IMR-90 (cell line): ENCODE measurements at regions of chr17 and their contacts with region 1.

Region 1: GRCh38 chr17:3845621-3846441 is at the start of gene NCBP3:
- DNase-seq: peak; percentile 91
- ATAC-seq: peak; percentile 100
- H3K4me3 ChIP-seq: peak within 1 kb of the TSS; percentile 88
- H3K27ac ChIP-seq: peak within 1 kb of the TSS; percentile 95
- H3K4me1 ChIP-seq: peaks cover 3% of the 10 kb centered on the region
- H3K27me3 ChIP-seq: peaks cover 6% of the 10 kb centered on the region
- CTCF ChIP-seq: peak; percentile 98
- POLR2A ChIP-seq: peak; percentile 95
- RAD21 ChIP-seq: peak; percentile 36
- total RNA-seq, gene NCBP3: 10.8 and 15.6 TPM in 2 replicates

Region 2: DNA sequence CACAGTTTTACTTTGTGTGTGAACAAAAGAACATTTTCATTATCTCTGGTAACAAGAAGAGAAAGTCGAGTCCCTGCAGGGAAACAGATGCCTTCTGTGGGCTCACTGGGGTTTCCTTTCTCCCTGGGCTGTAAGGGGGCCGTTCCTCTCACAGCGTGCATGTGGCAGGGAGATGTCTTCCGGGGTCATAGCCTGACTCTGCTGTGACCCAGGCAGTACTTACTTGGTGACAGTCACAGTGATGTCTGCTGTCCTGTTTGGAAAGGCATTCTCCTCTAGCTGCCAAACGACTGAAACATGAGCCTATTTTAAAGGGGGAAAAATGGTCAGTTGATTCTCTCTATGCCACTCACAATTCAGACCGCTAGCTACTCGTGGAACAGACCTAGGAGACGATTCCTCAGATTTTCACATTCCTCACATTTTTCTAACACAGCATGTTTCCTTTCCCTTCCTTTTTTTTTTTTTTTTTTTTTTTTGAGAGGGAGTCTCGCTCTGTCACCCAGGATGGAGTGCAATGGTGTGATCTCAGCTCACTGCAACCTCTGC is 114.9 kb before region 1 on chr17:
- CTCF ChIA-PET with region 1: interaction called, 10 read pairs
- POLR2A ChIA-PET with region 1: interaction called, 3 read pairs
- dilution Hi-C with region 1: no loop called
- in situ Hi-C with region 1: no loop called
- intact Hi-C with region 1: no loop called
- DNase-seq: peak; percentile 42
- ATAC-seq: peak; percentile 58
- H3K4me3 ChIP-seq: no peak overlapping the region
- H3K27ac ChIP-seq: peak overlapping the region; percentile 91
- H3K4me1 ChIP-seq: peaks cover 16% of the 10 kb centered on the region
- H3K27me3 ChIP-seq: no peaks in the 10 kb centered on the region
- CTCF ChIP-seq: no peak
- POLR2A ChIP-seq: no peak
- RAD21 ChIP-seq: no peak

Region 3: GRCh38 chr17:3827124-3827773 is 18.6 kb before region 1 on chr17:
- CTCF ChIA-PET with region 1: interaction called, 10 read pairs
- POLR2A ChIA-PET with region 1: no interaction called
- dilution Hi-C with region 1: no loop called
- in situ Hi-C with region 1: no loop called
- intact Hi-C with region 1: no loop called
- DNase-seq: peak; percentile 66
- ATAC-seq: no peak
- H3K4me3 ChIP-seq: no peak overlapping the region
- H3K27ac ChIP-seq: no peak overlapping the region
- H3K4me1 ChIP-seq: peaks cover 10% of the 10 kb centered on the region
- H3K27me3 ChIP-seq: no peaks in the 10 kb centered on the region
- CTCF ChIP-seq: peak; percentile 64
- POLR2A ChIP-seq: no peak
- RAD21 ChIP-seq: peak; percentile 82

Region 4: DNA sequence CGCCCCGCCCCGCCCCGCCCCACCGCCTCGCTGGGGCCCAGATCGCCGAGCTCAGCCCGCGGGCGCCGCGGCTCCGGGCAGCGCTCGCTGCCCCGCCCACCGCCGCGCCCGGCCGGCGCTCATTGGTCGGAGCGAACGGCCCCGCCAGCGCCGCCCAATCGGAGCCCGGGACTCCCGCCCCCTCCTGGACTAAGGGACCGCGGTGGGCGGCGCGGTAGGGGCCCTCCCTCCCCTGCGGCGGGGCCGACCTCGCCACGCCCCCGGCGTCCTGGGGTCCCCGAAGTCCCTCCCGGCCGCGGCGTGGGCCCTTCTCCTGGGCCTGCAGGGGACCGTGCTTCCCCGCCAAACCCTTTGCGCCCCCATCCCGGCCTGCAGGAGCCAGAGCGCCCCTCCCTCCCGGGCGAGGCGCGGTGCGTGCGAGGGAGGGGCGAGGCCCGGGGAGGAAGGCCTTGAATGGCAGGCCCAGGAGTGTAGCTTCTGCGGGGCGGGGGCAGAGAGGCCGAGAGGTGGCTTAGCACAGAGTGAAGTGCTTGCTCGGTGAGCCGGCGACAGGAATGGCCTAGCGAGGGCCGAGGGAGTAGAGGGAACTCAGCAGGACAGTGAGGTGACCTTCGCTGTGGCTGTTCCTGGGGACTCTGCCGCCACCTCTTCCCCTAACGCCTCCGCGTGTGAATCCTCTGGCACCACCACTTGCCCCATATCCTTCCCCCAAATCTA is 47.3 kb after region 1 on chr17 and contains the start of gene CAMKK1:
- CTCF ChIA-PET with region 1: interaction called, 7 read pairs
- POLR2A ChIA-PET with region 1: no interaction called
- dilution Hi-C with region 1: no loop called
- in situ Hi-C with region 1: no loop called
- intact Hi-C with region 1: loop called (anchors 2 kb)
- DNase-seq: peak; percentile 72
- ATAC-seq: peak; percentile 86
- H3K4me3 ChIP-seq: peak within 1 kb of the TSS; percentile 67
- H3K27ac ChIP-seq: peak within 1 kb of the TSS; percentile 71
- H3K4me1 ChIP-seq: peaks cover 37% of the 10 kb centered on the region
- H3K27me3 ChIP-seq: no peaks in the 10 kb centered on the region
- CTCF ChIP-seq: no peak
- POLR2A ChIP-seq: no peak; the same call in 1 of the 2 replicates
- RAD21 ChIP-seq: no peak
- total RNA-seq, gene CAMKK1: 4.1 and 4.2 TPM in 2 replicates